K562 (cell line): ENCODE measurements at regions of chr7 and their contacts with region 1.

Region 1: GRCh38 chr7:90403174-90404113 is at the start of gene CLDN12:
- DNase-seq: peak; percentile 79 to 95 (median 86)
- ATAC-seq: peak; percentile 99
- H3K4me3 ChIP-seq: peak within 1 kb of the TSS; percentile 44
- H3K27ac ChIP-seq: peak within 1 kb of the TSS; percentile 68
- H3K4me1 ChIP-seq: peaks cover 3 to 6% of the 10 kb centered on the region in 2 experiments; a peak in 3 of 5 replicates
- H3K27me3 ChIP-seq: no peaks in the 10 kb centered on the region
- CTCF ChIP-seq: no peak
- EP300 ChIP-seq: peak; percentile 54; the same call in 1 of the 2 replicates
- POLR2A ChIP-seq: peak; percentile 84
- RAD21 ChIP-seq: no peak
- polyA plus RNA-seq, gene CLDN12: 17.5 to 18.0 TPM

Region 2: DNA sequence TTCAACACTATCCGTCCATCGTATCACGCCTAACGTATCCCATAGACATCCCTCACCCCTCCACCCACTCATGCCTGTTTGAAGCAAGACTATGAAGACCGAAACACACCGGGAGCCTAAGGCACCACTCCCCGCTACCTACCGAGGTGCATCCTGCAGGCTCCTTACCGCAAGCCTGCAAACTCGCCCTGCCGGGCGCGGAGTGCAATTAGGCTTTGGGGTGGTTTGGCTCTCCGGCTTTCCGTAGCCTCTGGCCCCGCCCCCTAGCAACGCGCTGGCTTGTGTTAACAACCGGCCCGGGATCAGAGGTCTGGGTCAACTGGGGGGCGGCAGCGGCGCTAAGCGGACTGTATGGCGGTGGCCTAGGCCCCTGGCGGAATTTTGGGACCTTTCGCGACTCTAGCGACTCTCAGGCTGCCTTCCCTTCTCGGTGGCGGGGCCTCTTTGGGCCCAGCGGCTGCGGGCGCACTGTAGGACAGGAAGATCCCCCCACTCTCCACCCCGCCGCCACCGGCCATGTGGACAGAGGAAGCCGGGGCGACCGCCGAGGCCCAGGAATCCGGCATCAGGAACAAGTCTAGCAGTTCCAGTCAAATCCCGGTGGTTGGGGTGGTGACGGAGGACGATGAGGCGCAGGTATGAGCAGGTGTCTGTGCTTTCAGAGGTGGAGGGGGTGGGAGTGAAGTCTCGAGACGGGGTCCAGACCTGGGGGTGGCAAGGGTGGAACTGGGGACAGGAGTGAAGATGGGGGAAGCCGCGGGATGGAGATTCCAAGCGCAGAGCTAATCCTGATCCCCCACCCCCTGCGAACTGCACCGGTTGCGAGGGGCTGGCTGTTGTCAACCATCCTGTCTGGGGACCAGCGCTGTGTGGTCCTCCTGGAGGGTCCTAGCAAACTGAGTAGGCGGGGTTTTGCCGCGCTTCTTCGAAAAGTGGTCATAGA is 158.3 kb before region 1 on chr7 and contains the start of gene CFAP69:
- CTCF ChIA-PET with region 1: no interaction called
- POLR2A ChIA-PET with region 1: no interaction called
- in situ Hi-C with region 1: no loop called
- intact Hi-C with region 1: loop called (anchors 5 kb)
- DNase-seq: peak; percentile 91 to 95 (median 94)
- ATAC-seq: peak; percentile 95
- H3K4me3 ChIP-seq: peak within 1 kb of the TSS; percentile 67
- H3K27ac ChIP-seq: no peak within 1 kb of the TSS
- H3K4me1 ChIP-seq: peaks cover 4 to 9% of the 10 kb centered on the region in 2 experiments; a peak in 3 of 5 replicates
- H3K27me3 ChIP-seq: no peaks in the 10 kb centered on the region
- CTCF ChIP-seq: peak; percentile 24 to 34 (median 26); a peak in 2 of 6 replicates
- EP300 ChIP-seq: no peak
- POLR2A ChIP-seq: peak; percentile 68
- RAD21 ChIP-seq: no peak; a peak in 1 of 4 replicates
- polyA plus RNA-seq, gene CFAP69: 0.24 to 0.84 TPM

Region 3: DNA sequence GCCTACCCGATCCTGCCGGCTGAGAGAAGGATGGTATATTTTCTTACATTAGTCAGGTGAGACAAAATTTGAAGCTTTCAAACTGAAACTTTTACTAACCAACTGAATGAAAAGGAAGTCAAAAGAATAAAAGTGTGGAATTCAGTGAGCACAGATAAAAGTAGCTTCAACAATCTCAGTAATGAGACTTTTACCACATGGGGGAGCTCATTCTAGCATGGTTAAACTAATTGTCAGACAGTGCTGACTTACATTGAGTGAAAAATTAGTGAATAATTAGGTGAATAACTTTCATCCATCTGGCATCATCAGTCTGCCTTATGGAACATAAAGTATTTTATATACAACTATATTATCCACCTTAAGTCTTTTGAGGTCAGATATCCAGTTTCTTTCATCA is 90.7 kb before region 1 on chr7:
- CTCF ChIA-PET with region 1: no interaction called
- POLR2A ChIA-PET with region 1: interaction called, 3 read pairs
- in situ Hi-C with region 1: no loop called
- intact Hi-C with region 1: loop called (anchors 5 kb)
- DNase-seq: peak in 1 of 4 experiments; percentile 11
- ATAC-seq: peak; percentile 67; the same call in 2 of the 3 replicates
- H3K4me3 ChIP-seq: no peak overlapping the region
- H3K27ac ChIP-seq: no peak overlapping the region
- H3K4me1 ChIP-seq: no peaks in the 10 kb centered on the region
- H3K27me3 ChIP-seq: no peaks in the 10 kb centered on the region; a peak in 1 of 5 replicates
- CTCF ChIP-seq: peak in 1 of 3 experiments; percentile 47; a peak in 3 of 6 replicates
- EP300 ChIP-seq: no peak
- POLR2A ChIP-seq: no peak
- RAD21 ChIP-seq: peak in 1 of 2 experiments; percentile 49; a peak in 1 of 4 replicates

Region 4: DNA sequence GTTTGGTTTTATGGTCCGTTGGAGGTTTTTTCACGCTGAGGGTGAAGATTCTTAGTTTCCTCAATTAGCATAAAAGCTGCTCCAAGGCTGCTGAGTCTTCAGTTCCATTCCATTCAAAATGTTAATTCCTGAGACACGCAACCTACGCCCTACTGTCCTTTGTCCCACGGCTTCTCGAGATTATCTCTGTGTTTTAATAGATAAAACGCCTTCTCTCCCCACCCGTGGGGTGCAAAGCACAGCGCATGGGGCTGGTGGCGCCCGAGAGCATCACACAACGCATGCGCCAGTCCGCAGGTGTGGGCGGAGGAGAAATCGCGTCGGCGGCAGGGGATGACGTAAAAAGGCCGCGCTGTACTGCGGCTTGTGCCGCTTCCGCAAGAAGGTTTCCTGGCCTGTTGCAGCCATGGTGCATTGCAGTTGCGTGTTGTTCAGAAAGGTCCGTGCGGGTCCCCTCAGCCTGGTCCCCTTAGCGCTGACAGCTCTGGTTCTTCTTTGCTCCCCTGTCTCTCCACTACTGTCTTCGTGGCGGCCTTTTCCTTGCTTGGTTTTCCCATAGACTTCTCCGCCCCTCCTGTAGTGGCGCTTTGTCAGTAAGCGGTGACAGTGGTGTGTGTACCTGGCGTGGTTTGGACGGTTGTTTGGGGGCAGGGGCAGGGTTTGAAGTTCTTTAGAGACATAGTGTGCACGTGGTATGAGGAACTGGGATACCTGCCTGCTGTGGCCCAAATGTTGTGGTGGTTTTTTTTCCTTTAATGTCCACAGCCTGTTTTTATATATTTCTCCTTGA is 56.9 kb before region 1 on chr7 and contains the start of gene GTPBP10:
- CTCF ChIA-PET with region 1: no interaction called
- POLR2A ChIA-PET with region 1: interaction called, 3 read pairs
- in situ Hi-C with region 1: loop called (anchors 5 kb)
- intact Hi-C with region 1: loop called (anchors 1 kb)
- DNase-seq: peak; percentile 95 to 99 (median 97)
- ATAC-seq: peak; percentile 92
- H3K4me3 ChIP-seq: peak within 1 kb of the TSS; percentile 77
- H3K27ac ChIP-seq: peak within 1 kb of the TSS; percentile 95
- H3K4me1 ChIP-seq: peaks cover 8 to 14% of the 10 kb centered on the region in 2 experiments; a peak in 3 of 5 replicates
- H3K27me3 ChIP-seq: no peaks in the 10 kb centered on the region
- CTCF ChIP-seq: peak; percentile 86 to 95 (median 91)
- EP300 ChIP-seq: peak; percentile 8; the same call in 1 of the 2 replicates
- POLR2A ChIP-seq: peak; percentile 98
- RAD21 ChIP-seq: no peak
- polyA plus RNA-seq, gene GTPBP10: 87.7 to 87.9 TPM